Heart right ventricle (tissue), 16 donors: ENCODE measurements at regions of chr4 and their contacts with region 1.

Region 1: DNA sequence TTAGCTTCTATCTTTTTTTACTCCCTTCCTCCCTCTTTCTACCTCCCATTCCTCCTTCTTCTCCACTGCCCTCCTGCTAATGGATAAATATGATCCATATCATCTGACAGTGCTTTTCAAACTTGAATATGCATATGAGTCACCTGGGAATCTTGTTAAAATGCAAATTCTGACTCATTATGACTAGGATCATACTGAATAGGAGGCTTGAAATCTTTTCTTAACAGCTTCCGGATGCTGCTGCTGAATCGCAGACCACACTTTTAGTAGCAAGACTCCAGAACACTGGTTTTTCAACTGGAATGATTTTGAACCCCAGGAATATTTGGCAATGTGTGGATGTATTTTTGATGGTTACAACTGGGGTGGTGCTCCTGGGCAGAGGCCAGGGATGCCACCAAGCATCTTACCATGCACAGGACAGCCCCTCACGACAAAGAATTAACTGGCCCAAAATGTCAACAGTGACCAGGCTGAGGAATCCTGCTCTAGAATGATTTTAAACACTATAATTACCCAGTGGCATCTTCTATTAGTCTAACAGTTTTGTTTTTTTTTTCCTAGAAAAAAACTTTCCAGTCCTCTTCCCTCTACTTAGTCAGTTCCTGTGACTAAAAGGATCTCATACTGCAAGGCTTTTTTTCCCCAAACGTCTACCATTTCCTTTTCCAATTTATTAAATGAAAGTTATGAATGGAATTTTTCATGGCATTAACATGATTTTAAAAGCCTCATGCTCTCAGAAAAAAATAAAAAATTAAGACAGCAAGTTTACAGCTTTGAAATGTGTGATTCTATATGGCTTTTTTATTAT is 10.6 kb upstream of the PYURF start:
- DNase-seq: no peak
- ATAC-seq: no peak
- H3K4me3 ChIP-seq: no peak overlapping the region
- H3K27ac ChIP-seq: peak overlapping the region in 1 of 10 donors; percentile 15
- H3K4me1 ChIP-seq: peaks cover 0 to 7% (median under 1%) of the 10 kb centered on the region in 9 donors
- H3K27me3 ChIP-seq: no peaks in the 10 kb centered on the region
- CTCF ChIP-seq: no peak

Region 2: GRCh38 chr4:88613417-88613875 is 79.3 kb after region 1 on chr4:
- intact Hi-C with region 1: loop called in 1 of 10 experiments (anchors 2 kb)
- DNase-seq: no peak
- ATAC-seq: peak in 6 of 8 donors; percentile 23 to 61 (median 38)
- H3K4me3 ChIP-seq: peak overlapping the region in 2 of 10 donors; percentile 0 to 6
- H3K27ac ChIP-seq: peak overlapping the region; percentile 57 to 85 (median 72)
- H3K4me1 ChIP-seq: peaks cover 17 to 94% (median 68%) of the 10 kb centered on the region in 9 donors
- H3K27me3 ChIP-seq: no peaks in the 10 kb centered on the region
- CTCF ChIP-seq: no peak

Region 3: DNA sequence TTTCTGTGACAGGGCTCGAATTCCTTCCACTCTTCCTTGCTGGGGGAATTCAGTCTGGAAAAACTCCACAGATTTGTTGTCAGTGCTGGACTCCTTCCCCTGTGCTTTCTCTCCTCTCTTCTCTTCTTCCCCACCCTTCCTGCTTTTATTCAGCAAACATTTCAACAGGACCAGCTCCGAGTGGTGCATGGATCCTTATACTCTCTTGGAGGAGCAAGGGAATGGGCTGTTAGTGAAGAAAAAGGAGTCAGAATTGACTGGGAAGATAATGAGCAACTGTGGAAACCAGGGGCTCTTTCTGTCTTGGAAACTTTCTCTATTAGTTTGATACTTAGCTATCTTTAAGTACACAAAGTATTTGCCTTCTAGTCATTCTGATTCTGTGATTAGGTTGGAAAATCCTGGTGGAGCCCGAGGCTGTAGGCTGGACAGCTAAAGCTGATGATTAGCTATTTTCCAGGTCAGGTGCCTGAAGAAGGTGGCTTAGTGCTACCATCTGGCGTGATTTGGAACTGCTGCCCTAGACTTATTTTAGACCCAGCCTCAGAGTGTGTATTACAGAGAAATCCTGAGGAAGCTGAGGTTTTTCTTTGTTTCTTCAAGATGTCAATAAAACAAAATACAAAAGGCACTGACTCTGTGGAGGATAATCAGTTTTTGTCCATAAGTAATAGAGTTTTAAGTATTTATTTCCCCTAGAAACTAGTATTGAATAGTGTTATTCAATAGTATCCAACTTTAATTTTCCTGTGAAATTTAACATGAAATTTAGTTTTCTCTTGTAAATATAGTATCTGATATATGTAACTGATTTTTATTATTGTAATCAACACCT is 125.1 kb after region 1 on chr4:
- intact Hi-C with region 1: loop called (anchors 1 to 5 kb)
- DNase-seq: peak in 1 of 2 donors; percentile 46
- ATAC-seq: peak; percentile 87 to 98 (median 96)
- H3K4me3 ChIP-seq: no peak overlapping the region
- H3K27ac ChIP-seq: peak overlapping the region in 3 of 10 donors; percentile 28 to 44 (median 28)
- H3K4me1 ChIP-seq: peaks cover 0 to 12% (median 0%) of the 10 kb centered on the region in 9 donors
- H3K27me3 ChIP-seq: no peaks in the 10 kb centered on the region
- CTCF ChIP-seq: peak; percentile 39 to 81 (median 75)

Region 4: GRCh38 chr4:89024051-89024675 is 490.0 kb after region 1 on chr4:
- intact Hi-C with region 1: loop called in 7 of 10 experiments (anchors 5 to 10 kb)
- DNase-seq: peak in 1 of 2 donors; percentile 68
- ATAC-seq: peak; percentile 78 to 97 (median 95)
- H3K4me3 ChIP-seq: no peak overlapping the region
- H3K27ac ChIP-seq: no peak overlapping the region
- H3K4me1 ChIP-seq: peaks cover 0 to 23% (median 7%) of the 10 kb centered on the region in 9 donors
- H3K27me3 ChIP-seq: no peaks in the 10 kb centered on the region
- CTCF ChIP-seq: peak; percentile 57 to 92 (median 86)